ENCODE measurements at regions of chr17 and their contacts with region 1.

Region 1: GRCh38 chr17:64420143-64420971 is 28.6 kb upstream of the MILR1 start:
- DNase-seq: peak; percentile 59 to 83 (median 66)
- ATAC-seq: peak; percentile 92
- H3K4me3 ChIP-seq: no peak overlapping the region
- H3K27ac ChIP-seq: no peak overlapping the region
- H3K4me1 ChIP-seq: peaks cover 0 to 9% of the 10 kb centered on the region in 2 experiments; a peak in 1 of 5 replicates
- H3K27me3 ChIP-seq: no peaks in the 10 kb centered on the region
- CTCF ChIP-seq: peak; percentile 75 to 90 (median 79)
- EP300 ChIP-seq: no peak
- POLR2A ChIP-seq: no peak
- RAD21 ChIP-seq: peak; percentile 94 to 95

Region 2: DNA sequence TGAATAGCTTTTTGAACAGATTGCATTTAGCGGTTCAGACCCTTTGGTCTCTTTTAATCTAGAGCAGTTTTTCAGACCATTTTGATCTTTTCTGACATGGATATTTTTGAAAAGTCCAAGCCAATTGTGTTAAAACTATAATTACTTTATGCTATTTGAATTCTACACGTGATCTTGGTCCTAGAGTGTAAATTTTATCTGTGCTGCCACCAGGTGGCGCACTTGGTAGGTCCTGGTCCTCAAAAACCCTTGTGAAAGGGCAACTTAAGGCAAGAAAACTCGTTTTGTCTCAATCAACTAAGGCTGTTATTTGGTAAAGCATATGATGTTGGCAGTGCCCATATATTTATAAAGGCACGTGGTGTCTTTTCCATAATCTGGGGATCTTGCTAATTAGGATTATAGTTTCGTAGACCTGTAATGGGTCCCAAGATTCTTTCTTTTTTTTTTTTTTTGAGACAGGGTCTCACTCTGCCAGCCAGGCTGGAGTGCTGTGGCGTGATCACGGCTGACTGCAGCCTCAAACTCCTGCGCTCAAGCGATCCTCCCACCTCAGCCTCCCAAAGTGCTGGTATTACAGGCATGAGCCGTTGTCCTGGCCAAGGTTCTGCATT is 113.4 kb before region 1 on chr17:
- CTCF ChIA-PET with region 1: interaction called, 71 read pairs
- POLR2A ChIA-PET with region 1: interaction called, 3 read pairs
- in situ Hi-C with region 1: no loop called
- intact Hi-C with region 1: loop called (anchors 1 kb)
- DNase-seq: peak; percentile 67 to 84 (median 69)
- ATAC-seq: peak; percentile 79
- H3K4me3 ChIP-seq: no peak overlapping the region
- H3K27ac ChIP-seq: no peak overlapping the region
- H3K4me1 ChIP-seq: no peaks in the 10 kb centered on the region; a peak in 2 of 5 replicates
- H3K27me3 ChIP-seq: peaks cover 0 to 6% of the 10 kb centered on the region in 2 experiments; a peak in 2 of 5 replicates
- CTCF ChIP-seq: peak; percentile 73 to 85 (median 79)
- EP300 ChIP-seq: no peak
- POLR2A ChIP-seq: no peak
- RAD21 ChIP-seq: peak; percentile 68 to 86

Region 3: DNA sequence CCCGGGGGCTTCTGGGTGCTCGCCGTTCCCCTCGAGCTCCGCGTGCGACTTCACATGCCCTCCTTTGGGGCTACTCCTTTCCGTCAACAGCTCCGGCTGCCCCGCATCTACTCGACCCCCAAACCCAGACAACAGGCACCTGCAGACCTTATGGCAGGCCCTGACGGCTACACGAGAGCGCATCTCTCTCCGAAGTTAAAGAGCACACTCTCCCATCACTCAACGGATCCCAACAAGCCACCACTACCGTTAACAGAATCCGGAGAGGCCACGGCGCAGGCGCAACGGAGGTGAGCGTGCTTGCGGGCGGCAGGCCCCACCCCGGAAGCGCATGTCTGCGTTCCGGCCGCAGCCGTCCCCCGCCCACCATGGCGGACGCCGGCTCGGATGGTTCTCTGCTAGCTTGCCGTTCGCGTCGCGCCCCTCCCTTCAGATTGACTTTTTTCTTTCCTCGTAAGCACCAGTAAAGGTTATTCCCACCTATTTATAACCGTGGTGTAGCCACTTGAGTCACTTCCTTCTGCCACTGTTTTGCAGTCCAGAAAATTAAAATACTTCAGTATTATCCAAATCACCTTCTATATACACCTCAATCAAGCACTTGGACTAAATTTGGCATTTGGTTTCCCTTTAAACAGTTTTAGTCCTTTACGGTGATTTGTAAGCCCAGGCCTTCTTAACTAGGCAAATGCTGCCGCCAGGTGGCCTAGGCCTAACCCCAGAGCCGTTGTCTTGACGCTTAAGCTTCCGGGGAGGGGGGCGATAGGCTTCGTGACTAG is 76.6 kb after region 1 on chr17 and contains the start of gene POLG2:
- CTCF ChIA-PET with region 1: interaction called, 16 read pairs
- POLR2A ChIA-PET with region 1: interaction called, 59 read pairs
- in situ Hi-C with region 1: loop called (anchors 5 kb)
- intact Hi-C with region 1: loop called (anchors 2 kb)
- DNase-seq: peak; percentile 90 to 96 (median 93)
- ATAC-seq: peak; percentile 86
- H3K4me3 ChIP-seq: peak within 1 kb of the TSS; percentile 69
- H3K27ac ChIP-seq: peak within 1 kb of the TSS; percentile 90
- H3K4me1 ChIP-seq: peaks cover 4 to 10% of the 10 kb centered on the region in 2 experiments; a peak in 3 of 5 replicates
- H3K27me3 ChIP-seq: no peaks in the 10 kb centered on the region
- CTCF ChIP-seq: peak; percentile 66 to 84 (median 69)
- EP300 ChIP-seq: peak; percentile 7
- POLR2A ChIP-seq: peak; percentile 94
- RAD21 ChIP-seq: peak; percentile 67 to 73
- polyA plus RNA-seq, gene POLG2: 13.4 to 14.6 TPM

Region 4: DNA sequence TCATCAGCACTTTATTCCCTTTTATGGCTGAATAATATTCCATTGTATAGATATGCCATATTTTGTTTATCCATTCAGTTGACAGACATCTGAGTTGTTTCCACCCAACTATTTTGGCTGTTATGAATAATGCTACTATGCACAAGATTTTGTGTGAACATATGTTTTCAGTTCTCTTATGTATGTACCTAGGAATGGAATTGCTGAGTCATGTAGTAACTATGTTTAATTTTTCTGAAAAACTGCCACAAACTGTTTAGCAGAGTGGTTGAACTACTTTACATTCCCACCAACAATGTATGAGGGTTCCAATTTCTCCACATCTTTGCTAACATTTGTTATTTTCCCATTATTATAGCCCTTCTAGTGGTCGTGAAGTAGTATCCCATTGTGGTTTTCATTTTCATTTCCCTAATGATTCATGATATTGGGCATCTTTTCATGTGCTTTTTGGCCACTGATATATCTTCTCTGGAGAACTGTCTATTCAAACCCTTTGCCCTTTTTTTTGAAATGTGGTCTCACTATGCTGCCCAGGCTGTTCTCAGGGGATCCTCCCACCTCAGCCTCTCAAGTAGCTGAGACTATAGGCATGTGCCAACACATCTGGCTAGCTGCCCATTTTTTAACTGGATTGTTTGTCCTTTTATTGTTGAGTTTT is 215.4 kb after region 1 on chr17:
- CTCF ChIA-PET with region 1: no interaction called
- POLR2A ChIA-PET with region 1: no interaction called
- in situ Hi-C with region 1: no loop called
- intact Hi-C with region 1: loop called (anchors 2 kb)
- DNase-seq: no peak
- ATAC-seq: no peak
- H3K4me3 ChIP-seq: no peak overlapping the region
- H3K27ac ChIP-seq: peak overlapping the region; percentile 56
- H3K4me1 ChIP-seq: peaks cover 0 to 7% of the 10 kb centered on the region in 2 experiments; a peak in 3 of 5 replicates
- H3K27me3 ChIP-seq: no peaks in the 10 kb centered on the region
- CTCF ChIP-seq: no peak
- EP300 ChIP-seq: no peak
- POLR2A ChIP-seq: no peak
- RAD21 ChIP-seq: no peak

Region 5: GRCh38 chr17:64736804-64737492 is 316.6 kb after region 1 on chr17:
- CTCF ChIA-PET with region 1: interaction called, 3 read pairs
- POLR2A ChIA-PET with region 1: interaction called, 3 read pairs
- in situ Hi-C with region 1: no loop called
- intact Hi-C with region 1: loop called (anchors 2 kb)
- DNase-seq: peak in 1 of 4 experiments; percentile 51
- ATAC-seq: peak; percentile 86
- H3K4me3 ChIP-seq: no peak overlapping the region
- H3K27ac ChIP-seq: no peak overlapping the region
- H3K4me1 ChIP-seq: peaks cover 2 to 4% of the 10 kb centered on the region in 2 experiments; a peak in 1 of 5 replicates
- H3K27me3 ChIP-seq: no peaks in the 10 kb centered on the region
- CTCF ChIP-seq: peak; percentile 54 to 71 (median 69)
- EP300 ChIP-seq: no peak
- POLR2A ChIP-seq: no peak
- RAD21 ChIP-seq: peak; percentile 55 to 75

Measured in K562 (cell line).